MCF 10A (cell line): ENCODE measurements at regions of chr17 and their contacts with region 1.

Region 1: DNA sequence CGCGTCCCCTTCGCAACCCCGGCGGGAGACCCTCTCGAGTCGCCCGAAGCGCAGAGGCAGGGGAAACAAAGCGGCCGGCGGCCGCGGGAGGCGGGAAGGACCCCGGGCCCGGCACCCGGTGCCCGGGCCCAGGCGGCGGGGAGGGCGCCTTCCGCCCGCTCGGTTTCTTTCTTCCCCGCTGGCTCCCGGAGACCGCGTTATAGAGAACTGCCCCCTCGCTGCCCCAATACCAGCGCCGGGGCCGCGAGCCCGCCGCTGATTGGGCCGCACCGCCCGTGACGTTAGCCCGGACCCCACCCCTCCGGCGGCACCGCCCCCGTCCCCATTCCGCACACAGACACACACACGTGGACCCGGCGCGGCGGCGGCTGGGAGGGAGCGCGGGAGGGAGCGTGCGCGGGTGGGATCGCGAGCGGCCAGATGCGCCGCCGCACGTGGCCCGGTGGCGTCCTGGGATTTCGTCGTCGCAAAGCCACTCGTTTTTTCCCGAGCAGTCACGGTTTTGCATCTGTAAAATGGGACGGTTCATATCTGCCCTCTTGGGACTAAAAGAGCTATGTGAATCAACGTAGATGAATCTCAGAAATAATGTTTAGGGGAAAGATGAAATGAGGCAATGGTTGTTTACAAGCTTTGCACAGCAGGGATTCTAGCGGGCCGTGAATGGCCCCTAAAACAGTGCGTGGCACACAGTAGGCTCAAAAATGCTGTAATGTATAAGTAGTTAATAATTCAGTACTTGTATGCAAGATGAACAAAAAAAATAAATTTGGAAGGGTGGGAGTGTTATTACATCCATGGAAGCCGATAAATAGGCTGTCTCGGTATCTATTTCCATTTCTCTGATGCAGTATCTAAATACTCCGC is at the start of gene EPOP:
- DNase-seq: peak; percentile 82
- H3K4me3 Mint-ChIP-seq: peak within 1 kb of the TSS; percentile 64
- H3K27ac Mint-ChIP-seq: no peak within 1 kb of the TSS
- H3K4me1 Mint-ChIP-seq: peaks cover 13% of the 10 kb centered on the region
- H3K27me3 Mint-ChIP-seq: peaks cover 2% of the 10 kb centered on the region
- CTCF ChIP-seq: no peak
- total RNA-seq, gene EPOP: 3.4 and 3.6 TPM in 2 replicates

Region 2: DNA sequence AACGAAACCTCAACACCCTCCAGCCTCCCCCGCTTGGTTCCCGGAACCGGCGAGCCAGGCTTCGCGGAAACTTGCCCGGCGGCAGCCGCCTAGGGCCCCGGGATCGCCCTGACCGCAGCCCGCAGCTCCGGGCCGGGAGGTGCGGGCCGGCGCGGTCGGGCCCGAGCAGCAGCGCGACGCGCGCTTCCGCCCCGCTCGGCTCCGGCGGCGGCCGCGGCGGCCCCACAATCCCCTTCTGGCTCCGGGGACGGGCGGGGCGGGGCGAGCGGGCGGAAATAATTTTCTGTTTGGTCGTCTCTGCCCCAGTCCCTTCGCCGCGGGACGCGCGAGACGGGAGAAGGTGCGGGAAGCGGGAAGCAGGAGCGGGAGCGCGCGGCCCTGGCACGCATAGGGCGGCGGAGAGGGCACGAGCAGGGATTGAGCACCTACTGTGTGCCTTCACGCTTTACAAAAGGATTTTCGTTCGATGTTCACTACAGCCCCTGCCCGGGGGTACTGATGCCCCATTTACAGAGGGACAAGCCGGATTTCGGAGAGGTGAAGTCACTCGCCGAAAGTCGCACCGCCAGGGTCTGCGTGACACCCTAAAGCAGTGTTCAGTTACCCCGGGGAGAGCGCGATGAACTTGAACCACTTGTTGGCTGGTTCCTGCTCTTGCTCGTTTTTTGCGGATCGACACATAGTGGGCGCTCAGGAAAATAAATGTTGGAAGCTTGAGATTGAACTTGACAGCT is 27.4 kb after region 1 on chr17:
- CTCF ChIA-PET with region 1: interaction called, 4 read pairs
- POLR2A ChIA-PET with region 1: interaction called, 39 read pairs
- intact Hi-C with region 1: loop called (anchors 2 kb)
- DNase-seq: peak; percentile 88
- H3K4me3 Mint-ChIP-seq: peak overlapping the region; percentile 99
- H3K27ac Mint-ChIP-seq: peak overlapping the region; percentile 75
- H3K4me1 Mint-ChIP-seq: peaks cover 17% of the 10 kb centered on the region
- H3K27me3 Mint-ChIP-seq: peaks cover 10% of the 10 kb centered on the region
- CTCF ChIP-seq: no peak

Region 3: GRCh38 chr17:38735161-38735997 is 60.4 kb after region 1 on chr17:
- CTCF ChIA-PET with region 1: interaction called, 37 read pairs
- POLR2A ChIA-PET with region 1: interaction called, 16 read pairs
- intact Hi-C with region 1: loop called (anchors 1 kb)
- DNase-seq: peak; percentile 43
- H3K4me3 Mint-ChIP-seq: no peak overlapping the region
- H3K27ac Mint-ChIP-seq: peak overlapping the region; percentile 31
- H3K4me1 Mint-ChIP-seq: peaks cover 18% of the 10 kb centered on the region
- H3K27me3 Mint-ChIP-seq: no peaks in the 10 kb centered on the region
- CTCF ChIP-seq: peak; percentile 89